ENCODE measurements at regions of chrX and their contacts with region 1.

Region 1: DNA sequence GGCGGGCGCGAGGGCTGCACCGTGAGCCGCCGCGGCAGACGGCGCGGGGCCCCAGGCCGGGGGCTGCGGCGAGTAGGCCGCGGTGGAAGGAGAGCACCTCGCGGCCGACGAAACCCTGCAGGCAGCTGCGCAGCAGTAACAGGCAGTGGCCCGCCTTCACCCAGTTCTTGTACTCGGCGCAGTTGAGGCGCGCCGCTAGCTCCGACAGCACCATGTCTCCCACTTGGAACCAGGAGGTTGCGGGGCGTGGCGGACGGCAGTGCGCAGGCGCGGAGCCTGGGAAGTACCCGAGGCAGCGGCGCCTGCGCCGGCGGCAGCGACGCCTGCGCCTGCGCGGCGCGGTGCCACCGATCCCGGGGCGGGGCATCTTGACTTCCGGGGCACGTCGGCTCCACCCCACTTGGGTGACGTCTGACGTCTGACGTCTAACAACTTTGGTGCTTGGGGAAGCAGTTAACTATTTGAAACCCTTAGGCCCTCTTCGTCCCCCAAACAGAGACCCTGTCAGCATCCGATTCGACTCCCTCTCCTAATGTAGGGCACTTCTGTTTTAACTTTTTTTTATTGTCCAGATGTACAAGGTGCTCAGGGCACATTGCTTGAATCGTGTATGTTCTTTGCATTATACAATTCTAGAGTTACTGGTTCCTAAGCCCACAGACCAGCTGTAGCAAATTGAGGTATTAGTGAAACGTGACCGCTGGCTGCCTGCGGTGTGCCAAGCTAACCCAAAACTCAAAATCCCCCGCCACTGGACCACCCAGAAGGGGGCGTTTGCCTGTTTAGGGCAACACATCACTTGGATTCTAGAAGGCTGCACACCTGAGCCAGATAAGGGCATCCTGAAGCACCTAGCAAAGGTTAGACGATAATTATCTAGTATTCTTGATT is at the start of gene CXorf38:
- DNase-seq: peak; percentile 81
- H3K4me3 Mint-ChIP-seq: peak within 1 kb of the TSS; percentile 85
- H3K27ac Mint-ChIP-seq: peak within 1 kb of the TSS; percentile 90
- H3K4me1 Mint-ChIP-seq: peaks cover 9% of the 10 kb centered on the region
- H3K27me3 Mint-ChIP-seq: peaks cover 42% of the 10 kb centered on the region
- CTCF ChIP-seq: no peak
- total RNA-seq, gene CXorf38: 21.4 and 21.9 TPM in 2 replicates

Region 2: GRCh38 chrX:40539214-40540142 is 108.1 kb before region 1 on chrX:
- CTCF ChIA-PET with region 1: interaction called, 8 read pairs
- POLR2A ChIA-PET with region 1: interaction called, 4 read pairs
- intact Hi-C with region 1: loop called (anchors 5 kb)
- DNase-seq: peak; percentile 27
- H3K4me3 Mint-ChIP-seq: no peak overlapping the region
- H3K27ac Mint-ChIP-seq: no peak overlapping the region
- H3K4me1 Mint-ChIP-seq: peaks cover 7% of the 10 kb centered on the region
- H3K27me3 Mint-ChIP-seq: peaks cover 86% of the 10 kb centered on the region
- CTCF ChIP-seq: no peak

Region 3: GRCh38 chrX:40671126-40671525 is 23.6 kb after region 1 on chrX:
- CTCF ChIA-PET with region 1: interaction called, 15 read pairs
- POLR2A ChIA-PET with region 1: interaction called, 3 read pairs
- intact Hi-C with region 1: no loop called
- DNase-seq: no peak
- H3K4me3 Mint-ChIP-seq: no peak overlapping the region
- H3K27ac Mint-ChIP-seq: no peak overlapping the region
- H3K4me1 Mint-ChIP-seq: no peaks in the 10 kb centered on the region
- H3K27me3 Mint-ChIP-seq: peaks cover 31% of the 10 kb centered on the region
- CTCF ChIP-seq: no peak

Region 4: DNA sequence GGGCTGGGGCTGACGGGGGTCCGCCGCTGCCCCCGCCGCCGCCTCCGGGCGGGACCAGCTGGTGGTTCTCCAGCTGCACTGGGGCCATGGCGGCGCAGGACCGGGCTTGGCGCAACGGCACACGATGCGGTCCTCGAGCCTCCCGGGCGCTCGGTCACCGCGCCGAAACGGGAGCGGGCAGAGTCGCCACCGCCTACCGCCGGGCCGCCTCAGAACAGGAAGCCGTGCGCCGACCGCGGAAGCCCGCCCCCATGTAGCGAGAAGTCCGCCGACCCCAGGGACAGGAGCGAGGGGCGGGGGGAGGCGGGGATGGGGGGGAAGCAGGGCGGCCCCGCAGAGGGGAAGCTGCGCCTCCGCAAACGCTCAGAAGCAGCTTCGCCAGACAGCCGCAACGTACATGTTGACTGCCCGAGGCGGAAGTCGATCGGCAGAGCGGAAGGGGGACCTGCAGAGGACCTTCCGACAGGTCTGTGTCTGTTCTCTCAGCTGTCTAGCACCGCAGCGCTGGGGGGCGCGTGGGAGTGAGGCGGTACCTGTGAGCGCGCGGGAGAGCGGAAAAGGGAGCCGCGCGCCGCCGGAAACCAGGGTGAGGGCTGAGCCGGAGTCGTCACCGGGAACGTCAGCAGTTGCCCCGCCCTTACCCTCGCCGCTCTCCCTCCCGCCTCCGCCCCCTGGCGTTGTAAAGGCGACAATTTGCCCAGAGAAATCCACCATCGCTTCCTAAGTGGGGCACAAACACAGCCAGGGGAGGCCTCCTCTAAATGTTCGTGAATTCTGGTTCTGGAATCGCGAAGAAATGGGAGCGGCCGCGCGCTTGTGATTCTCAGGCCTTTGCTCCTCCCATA is 88.0 kb after region 1 on chrX and contains the start of gene MED14:
- CTCF ChIA-PET with region 1: interaction called, 3 read pairs
- POLR2A ChIA-PET with region 1: no interaction called
- intact Hi-C with region 1: loop called (anchors 1 kb)
- DNase-seq: peak; percentile 90
- H3K4me3 Mint-ChIP-seq: peak within 1 kb of the TSS; percentile 94
- H3K27ac Mint-ChIP-seq: peak within 1 kb of the TSS; percentile 96
- H3K4me1 Mint-ChIP-seq: peaks cover 24% of the 10 kb centered on the region
- H3K27me3 Mint-ChIP-seq: peaks cover 51% of the 10 kb centered on the region
- CTCF ChIP-seq: peak; percentile 68
- total RNA-seq, gene MED14: 35.6 and 36.4 TPM in 2 replicates

Region 5: GRCh38 chrX:40832723-40833122 is 185.2 kb after region 1 on chrX:
- CTCF ChIA-PET with region 1: no interaction called
- POLR2A ChIA-PET with region 1: no interaction called
- intact Hi-C with region 1: no loop called
- DNase-seq: no peak
- H3K4me3 Mint-ChIP-seq: no peak overlapping the region
- H3K27ac Mint-ChIP-seq: no peak overlapping the region
- H3K4me1 Mint-ChIP-seq: no peaks in the 10 kb centered on the region
- H3K27me3 Mint-ChIP-seq: peaks cover 72% of the 10 kb centered on the region
- CTCF ChIP-seq: no peak

Region 6: DNA sequence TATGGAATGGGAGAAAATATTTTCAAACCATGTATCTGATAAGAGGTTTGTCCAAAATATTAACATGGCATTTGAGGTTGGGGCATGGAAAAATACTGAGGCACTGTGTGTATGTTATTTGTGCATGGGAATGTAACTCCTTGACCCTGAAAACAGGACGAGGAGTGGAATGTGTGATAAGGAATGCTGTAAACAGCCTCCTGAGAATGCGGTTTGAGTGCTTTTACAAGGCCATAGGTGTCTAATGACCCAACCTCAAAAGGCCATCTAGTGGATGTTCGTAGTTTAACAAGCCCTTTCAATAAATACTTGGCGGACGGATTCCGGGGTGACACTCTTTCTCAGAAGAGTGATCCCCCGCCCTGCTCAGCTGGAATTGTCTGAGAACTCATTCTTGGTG is 274.8 kb after region 1 on chrX:
- CTCF ChIA-PET with region 1: interaction called, 3 read pairs
- POLR2A ChIA-PET with region 1: no interaction called
- intact Hi-C with region 1: loop called (anchors 1 kb)
- DNase-seq: peak; percentile 69
- H3K4me3 Mint-ChIP-seq: no peak overlapping the region
- H3K27ac Mint-ChIP-seq: no peak overlapping the region
- H3K4me1 Mint-ChIP-seq: no peaks in the 10 kb centered on the region
- H3K27me3 Mint-ChIP-seq: peaks cover 72% of the 10 kb centered on the region
- CTCF ChIP-seq: peak; percentile 38

Measured in MCF 10A (cell line).